ENCODE measurements at regions of chr20 and their contacts with region 1.

Region 1: DNA sequence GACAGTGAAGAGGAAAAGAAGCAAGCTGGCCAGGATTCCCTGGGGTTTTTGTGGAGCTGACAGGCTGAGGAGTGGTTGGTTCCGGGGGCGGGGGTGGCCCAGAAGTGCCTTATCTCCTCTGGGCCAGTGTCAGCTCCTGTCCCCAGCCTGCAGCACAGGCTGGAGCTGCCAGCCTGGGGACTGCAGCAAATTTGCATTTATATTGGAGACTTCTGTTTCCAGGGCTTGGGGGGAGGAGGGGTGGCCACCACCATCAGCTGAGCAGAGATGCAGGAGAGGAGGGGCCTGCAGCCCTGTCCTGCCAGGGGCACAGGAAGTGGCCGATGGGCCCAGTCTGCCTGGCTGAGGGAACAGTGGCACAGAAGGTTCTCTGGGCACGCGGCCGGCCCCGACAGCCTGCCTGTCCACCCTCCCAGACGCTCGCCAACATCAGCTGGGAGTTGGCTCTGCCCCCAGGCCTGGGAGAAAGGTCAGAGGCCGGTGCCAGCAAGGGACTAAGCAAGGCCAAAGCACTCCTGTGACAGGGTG is 24.3 kb upstream of the SCRT2 start:
- DNase-seq: no peak
- ATAC-seq: no peak

Region 2: GRCh38 chr20:634556-634955 is 65.3 kb before region 1 on chr20:
- intact Hi-C with region 1: loop called in 1 of 2 experiments (anchors 10 kb)
- DNase-seq: no peak
- ATAC-seq: no peak